PC-9 (cell line): ENCODE measurements at regions of chr5 and their contacts with region 1.

Region 1: GRCh38 chr5:149683964-149684363 is 46.1 kb upstream of the PPARGC1B start:
- DNase-seq: no peak
- H3K4me3 ChIP-seq: no peak overlapping the region
- H3K27ac ChIP-seq: no peak overlapping the region
- H3K4me1 ChIP-seq: no peaks in the 10 kb centered on the region
- H3K27me3 ChIP-seq: peaks cover 71% of the 10 kb centered on the region
- CTCF ChIP-seq: no peak

Region 2: GRCh38 chr5:149802809-149803552 is 119.0 kb after region 1 on chr5:
- CTCF ChIA-PET with region 1: interaction called, 10 read pairs
- POLR2A ChIA-PET with region 1: no interaction called
- intact Hi-C with region 1: no loop called
- DNase-seq: no peak
- H3K4me3 ChIP-seq: no peak overlapping the region
- H3K27ac ChIP-seq: no peak overlapping the region
- H3K4me1 ChIP-seq: peaks cover 24% of the 10 kb centered on the region
- H3K27me3 ChIP-seq: no peaks in the 10 kb centered on the region
- CTCF ChIP-seq: no peak